ENCODE measurements at regions of chr19 and their contacts with region 1.

Region 1: GRCh38 chr19:3783660-3784584 is 2.3 kb downstream of the MATK start:
- DNase-seq: peak; percentile 71
- ATAC-seq: peak; percentile 66
- H3K4me3 Mint-ChIP-seq: peak overlapping the region; percentile 84
- H3K27ac Mint-ChIP-seq: peak overlapping the region; percentile 55
- H3K4me1 Mint-ChIP-seq: peaks cover 8% of the 10 kb centered on the region
- H3K27me3 Mint-ChIP-seq: no peaks in the 10 kb centered on the region
- CTCF ChIP-seq: peak; percentile 68

Region 2: DNA sequence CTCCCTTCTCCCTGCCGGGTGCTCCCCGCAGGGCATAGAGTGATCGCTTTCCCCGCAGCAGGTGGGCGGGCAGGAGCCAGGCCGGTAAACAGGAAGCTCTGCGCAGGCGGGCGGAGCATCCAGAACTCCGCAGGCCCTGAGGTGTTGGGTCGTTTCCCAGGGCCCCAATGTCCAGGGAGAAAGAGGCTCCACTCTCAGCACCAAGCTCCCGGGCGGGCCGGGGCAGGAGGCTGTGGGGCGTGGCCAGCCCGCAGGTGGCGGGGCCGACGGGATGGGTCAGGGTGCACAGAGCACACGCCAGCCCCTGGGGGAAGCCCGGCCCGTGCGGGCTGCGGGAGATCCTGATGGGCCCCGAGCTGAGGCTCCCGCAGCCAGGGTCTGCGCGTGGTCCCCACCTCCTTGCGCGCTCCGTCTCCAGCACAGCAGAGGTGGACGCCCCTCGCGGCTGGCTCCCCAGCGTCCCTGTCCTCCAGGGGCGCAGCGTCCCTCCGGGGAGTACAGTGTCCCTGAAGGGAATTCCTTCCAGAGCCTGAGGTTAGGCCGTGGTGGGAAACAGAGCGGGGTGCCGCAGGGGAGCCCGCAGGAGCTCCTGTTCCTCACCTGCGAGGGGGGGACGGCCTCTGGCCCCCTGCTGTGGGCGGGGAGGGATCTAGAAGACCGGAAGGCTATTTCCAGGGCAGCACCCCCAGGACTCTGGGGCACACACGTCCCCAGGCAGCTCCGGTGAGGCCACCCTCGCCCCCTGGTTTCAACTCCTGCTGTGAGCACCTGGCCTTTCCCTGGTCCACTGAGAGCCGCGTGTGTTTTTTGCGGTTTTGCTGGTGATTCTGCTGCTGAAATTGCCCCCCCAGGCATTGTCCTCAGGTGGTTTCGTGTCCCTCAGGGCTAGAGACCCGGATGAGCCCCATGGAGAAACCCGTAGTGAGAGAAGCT is 95.9 kb before region 1 on chr19:
- CTCF ChIA-PET with region 1: no interaction called
- POLR2A ChIA-PET with region 1: no interaction called
- intact Hi-C with region 1: no loop called
- DNase-seq: peak; percentile 70
- ATAC-seq: peak; percentile 57
- H3K4me3 Mint-ChIP-seq: peak overlapping the region; percentile 58
- H3K27ac Mint-ChIP-seq: peak overlapping the region; percentile 76
- H3K4me1 Mint-ChIP-seq: peaks cover 54% of the 10 kb centered on the region
- H3K27me3 Mint-ChIP-seq: no peaks in the 10 kb centered on the region
- CTCF ChIP-seq: no peak

Region 3: GRCh38 chr19:3725640-3726313 is 58.1 kb before region 1 on chr19:
- CTCF ChIA-PET with region 1: no interaction called
- POLR2A ChIA-PET with region 1: no interaction called
- intact Hi-C with region 1: no loop called
- DNase-seq: no peak
- ATAC-seq: no peak
- H3K4me3 Mint-ChIP-seq: no peak overlapping the region
- H3K27ac Mint-ChIP-seq: no peak overlapping the region
- H3K4me1 Mint-ChIP-seq: peaks cover 6% of the 10 kb centered on the region
- H3K27me3 Mint-ChIP-seq: peaks cover 9% of the 10 kb centered on the region
- CTCF ChIP-seq: no peak

Region 4: GRCh38 chr19:3762501-3763459 is 21.1 kb before region 1 on chr19 and contains the start of gene MRPL54:
- CTCF ChIA-PET with region 1: interaction called, 15 read pairs
- POLR2A ChIA-PET with region 1: interaction called, 5 read pairs
- intact Hi-C with region 1: no loop called
- DNase-seq: peak; percentile 99
- ATAC-seq: peak; percentile 87
- H3K4me3 Mint-ChIP-seq: peak within 1 kb of the TSS; percentile 99
- H3K27ac Mint-ChIP-seq: peak within 1 kb of the TSS; percentile 99
- H3K4me1 Mint-ChIP-seq: peaks cover 39% of the 10 kb centered on the region
- H3K27me3 Mint-ChIP-seq: no peaks in the 10 kb centered on the region
- CTCF ChIP-seq: no peak
- total RNA-seq, gene MRPL54: 47.4 to 50.9 TPM

Region 5: GRCh38 chr19:3798137-3798536 is 14.2 kb after region 1 on chr19:
- CTCF ChIA-PET with region 1: interaction called, 11 read pairs
- POLR2A ChIA-PET with region 1: interaction called, 4 read pairs
- intact Hi-C with region 1: no loop called
- DNase-seq: peak; percentile 50
- ATAC-seq: peak; percentile 74
- H3K4me3 Mint-ChIP-seq: no peak overlapping the region
- H3K27ac Mint-ChIP-seq: peak overlapping the region; percentile 52
- H3K4me1 Mint-ChIP-seq: peaks cover 21% of the 10 kb centered on the region
- H3K27me3 Mint-ChIP-seq: no peaks in the 10 kb centered on the region
- CTCF ChIP-seq: no peak

Region 6: GRCh38 chr19:3810708-3811355 is 26.9 kb after region 1 on chr19:
- CTCF ChIA-PET with region 1: interaction called, 3 read pairs
- POLR2A ChIA-PET with region 1: interaction called, 15 read pairs
- intact Hi-C with region 1: no loop called
- DNase-seq: no peak
- ATAC-seq: no peak
- H3K4me3 Mint-ChIP-seq: no peak overlapping the region
- H3K27ac Mint-ChIP-seq: peak overlapping the region; percentile 52
- H3K4me1 Mint-ChIP-seq: peaks cover 56% of the 10 kb centered on the region
- H3K27me3 Mint-ChIP-seq: no peaks in the 10 kb centered on the region
- CTCF ChIP-seq: no peak